IMR-90 (cell line): ENCODE measurements at regions of chr22 and their contacts with region 1.

Region 1: DNA sequence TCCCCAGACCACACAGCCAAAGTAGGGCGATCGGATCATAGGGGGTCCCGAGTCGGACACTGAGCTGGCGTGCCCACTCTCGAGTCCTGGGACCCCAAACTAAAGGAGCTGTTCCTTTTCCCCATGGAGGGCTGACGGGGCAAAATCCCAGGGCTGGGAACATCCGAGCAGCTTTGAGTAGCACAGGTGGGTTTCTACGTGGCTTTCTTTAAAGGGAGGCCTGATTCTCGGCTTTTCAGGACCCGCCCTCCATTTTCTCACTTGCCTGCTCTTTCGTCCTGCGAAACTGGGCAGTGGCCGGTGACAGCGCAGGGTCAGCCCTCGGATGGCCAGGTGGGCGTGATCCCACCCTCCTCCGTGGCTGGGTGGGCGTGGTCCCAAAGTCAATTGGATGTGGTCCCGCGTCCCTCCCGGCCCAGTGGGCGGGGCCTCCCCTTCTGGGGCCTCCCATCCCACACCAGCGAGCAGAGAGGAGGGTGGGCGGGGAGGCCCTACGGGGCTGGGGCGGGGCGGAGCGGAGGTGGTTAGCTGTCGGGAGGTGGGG is 17.5 kb upstream of the TXNRD2 start:
- DNase-seq: peak; percentile 39
- ATAC-seq: peak; percentile 61
- H3K4me3 ChIP-seq: no peak overlapping the region
- H3K27ac ChIP-seq: no peak overlapping the region
- H3K4me1 ChIP-seq: peaks cover 25% of the 10 kb centered on the region
- H3K27me3 ChIP-seq: no peaks in the 10 kb centered on the region
- CTCF ChIP-seq: no peak
- POLR2A ChIP-seq: no peak
- RAD21 ChIP-seq: no peak

Region 2: GRCh38 chr22:19931514-19931913 is 27.6 kb before region 1 on chr22:
- CTCF ChIA-PET with region 1: no interaction called
- POLR2A ChIA-PET with region 1: interaction called, 26 read pairs
- dilution Hi-C with region 1: no loop called
- in situ Hi-C with region 1: no loop called
- intact Hi-C with region 1: no loop called
- DNase-seq: no peak
- ATAC-seq: no peak
- H3K4me3 ChIP-seq: no peak overlapping the region
- H3K27ac ChIP-seq: no peak overlapping the region
- H3K4me1 ChIP-seq: no peaks in the 10 kb centered on the region
- H3K27me3 ChIP-seq: no peaks in the 10 kb centered on the region
- CTCF ChIP-seq: no peak
- POLR2A ChIP-seq: no peak
- RAD21 ChIP-seq: no peak